ENCODE measurements at regions of chr12 and their contacts with region 1.

Region 1: DNA sequence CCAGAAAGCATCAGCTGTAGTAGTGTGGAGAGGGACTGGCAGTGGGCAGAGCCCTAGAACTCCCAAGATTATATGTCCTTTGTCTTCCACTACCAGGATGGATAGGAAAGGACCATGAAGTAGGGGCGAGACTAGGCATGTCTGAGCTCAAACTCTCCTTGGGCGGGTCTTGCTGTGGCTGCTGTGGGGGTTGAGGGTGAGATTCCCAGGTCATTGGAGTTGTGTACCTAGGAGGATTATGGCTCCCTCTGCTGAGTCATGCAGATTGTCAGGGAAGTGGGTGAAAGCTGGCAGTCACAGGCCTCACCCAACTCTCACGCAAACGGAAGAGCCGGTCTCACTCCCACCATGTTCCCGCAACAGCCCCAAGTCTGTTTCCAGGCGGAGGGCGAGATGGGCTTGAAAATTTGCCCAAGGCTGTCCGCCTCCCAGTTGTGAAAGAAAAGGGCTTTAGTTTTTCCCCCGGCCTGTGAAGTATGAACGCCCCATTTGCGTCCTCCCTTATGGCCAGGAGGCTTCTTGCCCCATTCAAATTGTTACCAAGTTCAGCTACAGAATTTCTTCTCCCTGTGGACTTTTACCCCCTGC is 159.4 kb downstream of the SLC2A13 start:
- DNase-seq: no peak
- ATAC-seq: no peak
- H3K4me3 ChIP-seq: no peak overlapping the region
- H3K27ac ChIP-seq: no peak overlapping the region
- H3K4me1 ChIP-seq: no peaks in the 10 kb centered on the region
- H3K27me3 ChIP-seq: no peaks in the 10 kb centered on the region
- CTCF ChIP-seq: no peak
- EP300 ChIP-seq: no peak
- POLR2A ChIP-seq: no peak
- RAD21 ChIP-seq: no peak

Region 2: GRCh38 chr12:39958377-39958776 is 11.9 kb after region 1 on chr12:
- CTCF ChIA-PET with region 1: interaction called, 5 read pairs
- POLR2A ChIA-PET with region 1: no interaction called
- RAD21 ChIA-PET with region 1: no interaction called
- SMC1A ChIA-PET with region 1: interaction called, 11 read pairs
- in situ Hi-C with region 1: no loop called
- intact Hi-C with region 1: no loop called
- DNase-seq: no peak
- ATAC-seq: peak; percentile 56
- H3K4me3 ChIP-seq: no peak overlapping the region
- H3K27ac ChIP-seq: no peak overlapping the region
- H3K4me1 ChIP-seq: no peaks in the 10 kb centered on the region
- H3K27me3 ChIP-seq: no peaks in the 10 kb centered on the region
- CTCF ChIP-seq: peak; percentile 16 to 37 (median 35); a peak in 4 of 6 replicates
- EP300 ChIP-seq: no peak
- POLR2A ChIP-seq: no peak
- RAD21 ChIP-seq: peak; percentile 30; the same call in 1 of the 2 replicates

Measured in GM12878 (cell line).